T-cell (primary cell): ENCODE measurements at regions of chr12 and their contacts with region 1.

Region 1: DNA sequence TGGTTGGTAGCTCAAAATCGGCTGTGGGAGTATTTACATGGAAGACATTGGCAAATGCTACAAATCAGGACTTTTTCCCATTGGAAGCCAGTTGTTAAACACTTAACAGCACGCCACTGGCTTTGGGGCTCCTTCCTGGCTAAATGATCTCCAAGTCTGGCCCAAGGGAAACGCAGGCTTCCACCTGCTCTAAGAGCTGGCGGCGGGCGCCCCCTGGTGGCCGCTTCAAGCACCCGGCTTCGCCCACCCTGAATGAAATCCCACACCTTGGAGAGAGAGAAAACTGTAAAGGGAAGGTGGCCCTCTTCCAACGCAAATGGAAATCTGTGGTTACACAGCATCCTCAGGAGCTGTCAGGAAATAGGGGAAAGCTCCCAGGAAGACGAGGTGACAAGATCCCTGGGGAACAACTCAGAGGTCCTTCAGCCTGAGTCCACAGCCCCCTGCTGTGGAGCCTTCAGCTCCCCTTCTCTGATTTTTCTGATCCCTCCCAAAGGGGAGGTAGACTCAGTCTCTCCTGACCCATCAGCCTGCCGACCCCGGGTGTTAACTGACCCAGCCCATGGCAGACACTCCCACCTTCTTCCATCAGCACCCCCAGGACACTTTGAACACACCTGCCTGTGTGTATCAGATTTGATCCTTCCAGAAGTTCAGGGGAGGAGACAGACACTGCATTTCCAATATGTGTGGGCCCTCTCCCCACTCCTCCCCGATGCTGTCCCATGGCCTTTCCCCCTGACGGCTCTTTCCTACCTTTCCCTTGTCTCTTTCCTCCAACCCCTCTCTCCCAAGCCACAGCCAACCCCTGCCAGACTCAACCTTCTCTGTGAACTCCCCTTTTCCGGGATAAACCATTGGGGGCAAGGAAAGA is 15.4 kb downstream of the SELPLG start:
- DNase-seq: peak in 34 of 35 experiments; percentile 49 to 89 (median 70)
- ATAC-seq: peak; percentile 57 to 69 (median 62)
- H3K4me3 ChIP-seq: no peak overlapping the region
- H3K4me3 Mint-ChIP-seq: peak overlapping the region in 2 of 3 donors; percentile 2 to 69
- H3K27ac ChIP-seq: peak overlapping the region; percentile 86
- H3K27ac Mint-ChIP-seq: peak overlapping the region; percentile 86 to 87
- H3K4me1 ChIP-seq: peaks cover 22 to 53% of the 10 kb centered on the region in 2 experiments
- H3K4me1 Mint-ChIP-seq: peaks cover 62 to 84% (median 66%) of the 10 kb centered on the region in 3 donors
- H3K27me3 ChIP-seq: no peaks in the 10 kb centered on the region
- H3K27me3 Mint-ChIP-seq: no peaks in the 10 kb centered on the region

Region 2: DNA sequence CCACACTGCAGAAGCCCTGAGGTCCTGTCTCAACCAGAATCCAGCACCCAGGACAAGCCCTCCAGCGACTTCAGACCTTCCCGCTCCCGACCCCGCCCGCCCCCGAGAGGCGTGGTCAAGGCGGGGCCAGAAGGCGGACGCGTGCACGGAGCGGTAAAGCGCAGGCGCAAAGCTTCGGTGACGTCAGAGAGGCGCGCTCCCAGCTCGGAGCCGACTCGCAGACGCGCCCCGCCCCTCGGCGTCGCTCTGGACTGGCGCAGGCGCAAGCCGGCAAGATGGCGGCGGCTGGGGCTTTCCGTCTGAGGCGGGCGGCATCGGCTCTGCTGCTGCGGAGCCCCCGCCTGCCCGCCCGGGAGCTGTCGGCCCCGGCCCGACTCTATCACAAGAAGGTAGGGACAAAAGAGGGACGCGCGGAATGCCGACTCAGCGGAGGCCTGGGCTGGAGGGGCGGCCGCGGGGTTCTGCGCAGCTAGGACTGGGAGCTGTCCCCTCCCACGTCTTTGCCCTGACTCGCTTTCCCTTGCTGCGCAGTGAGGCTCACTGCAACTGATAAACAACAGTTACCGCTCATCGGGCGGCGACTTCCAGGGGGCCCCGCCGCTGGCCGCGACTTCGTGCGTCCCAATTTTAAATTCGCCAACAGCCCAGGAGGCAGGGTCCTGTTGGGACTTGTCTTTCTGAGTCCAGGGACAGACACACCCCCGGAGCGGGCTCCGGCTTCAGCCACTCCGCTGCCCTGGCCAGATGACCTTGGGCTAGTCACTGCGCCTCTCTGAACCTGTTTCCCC is 55.8 kb before region 1 on chr12 and contains the start of gene ISCU:
- CTCF ChIA-PET with region 1: interaction called, 84 to 140 read pairs
- POLR2A ChIA-PET with region 1: interaction called, 4 to 6 read pairs
- DNase-seq: peak; percentile 96 to 100 (median 99)
- ATAC-seq: peak; percentile 72 to 81 (median 73)
- H3K4me3 ChIP-seq: peak within 1 kb of the TSS; percentile 96
- H3K4me3 Mint-ChIP-seq: peak within 1 kb of the TSS; percentile 98 to 100 (median 100)
- H3K27ac ChIP-seq: peak within 1 kb of the TSS; percentile 98
- H3K27ac Mint-ChIP-seq: peak within 1 kb of the TSS; percentile 99 to 100
- H3K4me1 ChIP-seq: peaks cover 33 to 59% of the 10 kb centered on the region in 2 experiments
- H3K4me1 Mint-ChIP-seq: peaks cover 47 to 74% (median 69%) of the 10 kb centered on the region in 3 donors
- H3K27me3 ChIP-seq: no peaks in the 10 kb centered on the region
- H3K27me3 Mint-ChIP-seq: no peaks in the 10 kb centered on the region
- total RNA-seq, gene ISCU: 108 to 190 (median 130) TPM